ENCODE measurements at regions of chr1 and their contacts with region 1.

Region 1: DNA sequence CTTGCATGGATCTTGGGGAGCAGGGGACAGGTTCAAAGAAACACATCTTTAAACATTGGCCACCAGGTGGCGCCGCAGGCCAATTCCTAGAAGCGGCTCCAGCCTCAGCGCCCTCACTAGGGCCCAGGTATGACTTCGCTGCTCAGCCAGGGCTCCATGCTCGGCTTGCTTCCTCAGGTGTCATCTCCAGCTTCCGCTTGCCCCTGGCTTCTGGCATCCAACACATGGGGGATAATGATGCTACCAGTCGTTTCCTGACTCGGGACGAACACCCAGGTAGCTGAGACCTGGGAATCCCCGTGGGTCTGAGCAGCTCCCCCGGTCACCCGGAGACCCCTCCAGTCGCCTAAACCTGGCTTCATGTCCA is 8.5 kb upstream of the MEX3A start:
- DNase-seq: peak; percentile 89
- H3K4me3 ChIP-seq: no peak overlapping the region
- H3K27ac ChIP-seq: no peak overlapping the region
- H3K4me1 ChIP-seq: peaks cover 16% of the 10 kb centered on the region
- CTCF ChIP-seq: peak; percentile 97

Region 2: GRCh38 chr1:156193488-156194299 is 102.9 kb after region 1 on chr1 and contains the start of gene SLC25A44:
- CTCF ChIA-PET with region 1: no interaction called
- POLR2A ChIA-PET with region 1: no interaction called
- intact Hi-C with region 1: no loop called
- DNase-seq: peak; percentile 99
- H3K4me3 ChIP-seq: peak within 1 kb of the TSS; percentile 80
- H3K27ac ChIP-seq: peak within 1 kb of the TSS; percentile 52
- H3K4me1 ChIP-seq: peaks cover 24% of the 10 kb centered on the region
- CTCF ChIP-seq: peak; percentile 56
- total RNA-seq, gene SLC25A44: 8.5 and 11.0 TPM in 2 replicates

Region 3: GRCh38 chr1:156226116-156226538 is 135.3 kb after region 1 on chr1:
- CTCF ChIA-PET with region 1: no interaction called
- POLR2A ChIA-PET with region 1: no interaction called
- intact Hi-C with region 1: loop called (anchors 5 kb)
- DNase-seq: no peak
- H3K4me3 ChIP-seq: no peak overlapping the region
- H3K27ac ChIP-seq: peak overlapping the region; percentile 39
- H3K4me1 ChIP-seq: peaks cover 15% of the 10 kb centered on the region
- CTCF ChIP-seq: no peak